A673 (cell line): ENCODE measurements at regions of chr16 and their contacts with region 1.

Region 1: DNA sequence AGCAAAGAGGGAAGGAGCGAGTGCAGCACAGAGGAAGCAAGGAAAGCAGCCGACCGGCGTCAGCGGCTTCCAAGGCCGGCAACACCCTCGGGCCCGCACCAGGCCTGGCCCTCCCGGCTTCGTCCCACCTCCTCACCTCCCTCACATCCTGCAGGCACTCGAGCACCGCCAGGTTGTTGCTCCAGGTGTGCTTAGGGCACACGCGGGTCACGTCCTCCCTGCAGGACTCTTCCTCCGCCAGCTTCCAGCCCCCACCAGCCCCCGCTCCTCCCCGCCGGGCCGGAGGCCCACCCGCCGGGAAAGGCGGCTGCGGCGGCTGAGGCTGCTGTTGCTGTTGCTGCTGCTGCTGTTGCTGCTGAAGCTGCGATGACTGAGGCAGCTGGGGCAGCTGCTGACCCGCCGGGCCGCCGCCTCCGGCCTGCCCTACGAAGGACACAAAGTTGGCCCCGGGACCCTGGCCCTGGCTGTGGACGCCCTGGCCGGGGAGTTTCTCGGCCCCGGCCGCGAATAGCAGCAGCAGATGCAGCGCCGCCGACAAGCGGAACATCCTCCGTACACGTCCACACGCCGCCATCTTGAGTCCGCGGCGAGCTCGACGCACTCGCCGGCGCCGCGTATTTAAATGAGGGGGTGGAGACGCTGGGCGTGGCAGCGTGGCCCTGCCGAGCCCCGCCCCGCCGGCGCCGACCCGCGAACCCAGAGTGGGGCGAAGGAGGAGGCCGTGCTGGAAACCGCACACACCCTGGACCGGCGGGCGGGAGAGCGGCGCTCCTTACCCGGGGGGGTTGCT is at the start of gene GLG1:
- DNase-seq: peak; percentile 96
- H3K4me3 ChIP-seq: peak within 1 kb of the TSS; percentile 85
- H3K27ac ChIP-seq: peak within 1 kb of the TSS; percentile 94
- H3K4me1 ChIP-seq: peaks cover 11% of the 10 kb centered on the region
- H3K27me3 ChIP-seq: no peaks in the 10 kb centered on the region
- CTCF ChIP-seq: no peak
- total RNA-seq, gene GLG1: 487 and 587 TPM in 2 replicates

Region 2: DNA sequence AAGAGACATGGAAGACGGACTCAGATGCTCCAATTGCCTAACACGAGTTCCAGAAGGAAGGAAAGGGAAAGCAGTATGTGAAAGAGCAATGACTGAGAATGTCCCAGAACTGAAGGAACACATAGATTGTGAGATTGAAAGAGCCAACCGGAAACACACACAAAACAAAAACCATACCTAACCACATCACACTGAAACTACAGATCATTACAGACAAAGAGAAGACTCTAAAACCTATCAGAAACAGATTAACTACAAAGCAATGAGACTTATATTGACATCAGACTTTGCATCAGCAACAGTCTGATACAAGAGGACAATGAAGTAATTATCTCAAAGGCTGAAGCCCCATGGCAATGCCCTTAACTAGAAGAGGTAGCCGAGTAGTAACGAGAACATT is 139.8 kb before region 1 on chr16:
- CTCF ChIA-PET with region 1: no interaction called
- POLR2A ChIA-PET with region 1: no interaction called
- intact Hi-C with region 1: no loop called
- DNase-seq: no peak
- H3K4me3 ChIP-seq: no peak overlapping the region
- H3K27ac ChIP-seq: peak overlapping the region; percentile 4
- H3K4me1 ChIP-seq: peaks cover 5% of the 10 kb centered on the region
- H3K27me3 ChIP-seq: no peaks in the 10 kb centered on the region
- CTCF ChIP-seq: no peak

Region 3: DNA sequence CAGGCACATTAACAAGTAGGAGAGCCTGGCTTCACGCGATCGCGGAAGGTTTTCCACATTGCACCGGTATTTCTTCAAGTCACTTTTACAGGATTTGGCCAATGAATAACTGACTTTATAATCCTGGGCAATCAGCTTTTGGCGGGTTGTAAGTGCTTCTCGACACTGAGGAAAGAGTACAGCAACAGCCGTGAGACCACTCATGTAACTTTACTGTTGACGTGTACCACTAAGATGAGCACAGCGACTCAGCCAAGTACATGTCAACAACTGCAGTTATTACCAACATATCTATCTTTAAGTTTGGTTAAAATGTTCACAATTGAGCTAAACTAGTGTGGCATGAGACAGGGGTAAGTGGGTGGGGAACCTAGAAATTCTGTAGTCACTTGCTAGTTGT is 113.7 kb before region 1 on chr16:
- CTCF ChIA-PET with region 1: no interaction called
- POLR2A ChIA-PET with region 1: no interaction called
- intact Hi-C with region 1: loop called (anchors 10 kb)
- DNase-seq: no peak
- H3K4me3 ChIP-seq: no peak overlapping the region
- H3K27ac ChIP-seq: peak overlapping the region; percentile 61
- H3K4me1 ChIP-seq: peaks cover 37% of the 10 kb centered on the region
- H3K27me3 ChIP-seq: no peaks in the 10 kb centered on the region
- CTCF ChIP-seq: no peak

Region 4: DNA sequence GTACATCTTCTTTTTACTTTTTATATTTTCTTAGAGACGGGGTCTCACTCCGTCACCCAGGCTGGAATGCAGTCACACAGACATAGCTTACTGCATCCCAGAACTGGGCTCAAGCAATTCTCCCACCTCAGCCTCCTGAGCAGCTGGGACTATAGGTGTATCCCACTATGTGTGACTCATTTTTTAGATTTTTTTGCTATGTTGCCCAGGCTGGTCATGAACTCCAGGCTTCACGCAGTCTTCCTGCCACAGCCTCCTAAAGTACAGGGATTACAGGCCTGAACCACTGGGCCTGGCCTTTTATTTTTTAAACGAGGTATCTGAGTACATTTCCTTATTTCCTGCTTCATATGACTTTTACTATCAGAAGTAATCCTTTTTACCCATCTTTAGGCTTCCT is 47.8 kb before region 1 on chr16:
- CTCF ChIA-PET with region 1: no interaction called
- POLR2A ChIA-PET with region 1: interaction called, 5 read pairs
- intact Hi-C with region 1: loop called (anchors 1 kb)
- DNase-seq: peak; percentile 85
- H3K4me3 ChIP-seq: peak overlapping the region; percentile 36
- H3K27ac ChIP-seq: peak overlapping the region; percentile 85
- H3K4me1 ChIP-seq: peaks cover 90% of the 10 kb centered on the region
- H3K27me3 ChIP-seq: no peaks in the 10 kb centered on the region
- CTCF ChIP-seq: no peak

Region 5: DNA sequence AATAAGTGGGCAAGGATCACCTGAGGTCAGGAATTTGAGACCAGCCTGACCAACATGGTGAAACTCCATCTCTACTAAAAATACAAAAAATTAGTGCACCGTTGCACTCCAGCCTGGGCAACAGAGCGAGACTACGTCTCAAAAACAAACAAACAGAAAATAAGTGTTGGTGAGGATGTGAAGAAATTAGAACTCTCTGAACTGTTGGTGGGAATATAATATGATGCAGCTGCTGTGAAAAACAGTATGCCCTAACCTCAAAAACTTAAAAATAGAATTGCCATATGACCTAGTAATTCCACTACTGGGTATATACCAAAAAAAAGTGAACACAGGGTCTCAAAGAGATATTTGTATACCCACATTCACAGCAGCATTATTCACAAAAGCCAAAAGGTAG is 25.9 kb before region 1 on chr16:
- CTCF ChIA-PET with region 1: no interaction called
- POLR2A ChIA-PET with region 1: interaction called, 4 read pairs
- intact Hi-C with region 1: loop called (anchors 1 kb)
- DNase-seq: no peak
- H3K4me3 ChIP-seq: no peak overlapping the region
- H3K27ac ChIP-seq: peak overlapping the region; percentile 21
- H3K4me1 ChIP-seq: peaks cover 75% of the 10 kb centered on the region
- H3K27me3 ChIP-seq: no peaks in the 10 kb centered on the region
- CTCF ChIP-seq: no peak

Region 6: DNA sequence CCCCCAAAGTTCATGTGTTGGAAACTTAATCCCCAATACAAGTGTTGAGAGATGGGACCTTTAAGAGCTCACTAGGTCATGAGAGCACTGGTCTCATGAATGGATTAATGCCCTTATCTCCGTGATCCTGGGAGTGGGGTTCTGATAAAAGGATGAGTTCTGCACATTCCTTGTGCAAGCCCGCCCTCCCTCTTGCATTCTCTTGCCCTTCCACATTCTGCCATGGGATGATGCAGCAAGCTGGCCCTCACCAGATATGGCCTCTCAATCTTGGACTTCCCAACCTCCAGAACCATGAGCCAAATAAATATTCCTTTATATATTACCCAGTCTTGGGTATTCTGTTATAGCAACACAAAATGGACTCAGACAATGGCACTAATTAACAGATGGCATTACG is 13.9 kb before region 1 on chr16:
- CTCF ChIA-PET with region 1: no interaction called
- POLR2A ChIA-PET with region 1: interaction called, 10 read pairs
- intact Hi-C with region 1: no loop called
- DNase-seq: no peak
- H3K4me3 ChIP-seq: no peak overlapping the region
- H3K27ac ChIP-seq: no peak overlapping the region
- H3K4me1 ChIP-seq: peaks cover 65% of the 10 kb centered on the region
- H3K27me3 ChIP-seq: no peaks in the 10 kb centered on the region
- CTCF ChIP-seq: no peak